ENCODE measurements at regions of chr7 and their contacts with region 1.

Region 1: GRCh38 chr7:87416682-87417587 is 58.5 kb downstream of the ABCB4 start:
- DNase-seq: peak; percentile 48
- H3K4me3 ChIP-seq: no peak overlapping the region
- H3K27ac ChIP-seq: no peak overlapping the region
- H3K4me1 ChIP-seq: peaks cover 8 to 9% of the 10 kb centered on the region in 2 experiments; a peak in 3 of 4 replicates
- H3K27me3 ChIP-seq: no peaks in the 10 kb centered on the region
- CTCF ChIP-seq: peak; percentile 93
- EP300 ChIP-seq: no peak
- RAD21 ChIP-seq: peak; percentile 98

Region 2: DNA sequence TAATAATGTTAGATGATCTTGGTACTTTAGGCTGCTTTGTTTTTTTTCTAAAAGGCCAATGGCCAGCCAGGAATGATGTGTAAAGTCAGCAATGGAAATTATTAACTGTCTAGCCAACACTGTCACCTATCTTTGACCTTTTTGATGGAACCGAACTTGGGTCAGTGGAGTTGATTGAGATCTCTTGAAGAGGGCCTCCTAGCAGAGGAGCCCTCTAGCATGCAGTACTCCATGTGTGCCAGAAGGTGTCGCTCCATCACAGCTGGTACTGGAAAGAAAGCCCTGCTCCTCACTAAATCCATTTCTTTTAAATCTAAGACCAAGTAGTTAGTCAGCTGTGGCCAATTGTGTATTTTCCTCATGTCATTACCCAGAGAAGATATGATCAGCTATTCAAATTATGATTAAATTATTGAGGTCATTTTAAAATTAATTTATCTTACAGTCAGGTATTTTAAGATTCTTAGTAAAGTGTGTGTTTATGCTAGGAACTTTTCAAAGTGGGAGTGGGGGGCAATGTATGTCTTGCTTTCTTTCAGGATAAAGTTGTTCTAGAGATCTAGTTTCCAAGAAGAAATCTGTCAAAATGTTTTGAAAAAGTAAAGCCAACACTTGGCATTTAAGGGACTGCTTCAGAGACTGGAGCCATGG is 104.6 kb before region 1 on chr7:
- CTCF ChIA-PET with region 1: interaction called, 409 read pairs
- POLR2A ChIA-PET with region 1: no interaction called
- DNase-seq: peak; percentile 73
- H3K4me3 ChIP-seq: no peak overlapping the region; a peak in 1 of 4 replicates
- H3K27ac ChIP-seq: no peak overlapping the region
- H3K4me1 ChIP-seq: peaks cover 0 to 5% of the 10 kb centered on the region in 2 experiments; a peak in 1 of 4 replicates
- H3K27me3 ChIP-seq: no peaks in the 10 kb centered on the region
- CTCF ChIP-seq: peak; percentile 100
- EP300 ChIP-seq: no peak
- RAD21 ChIP-seq: peak; percentile 100

Region 3: GRCh38 chr7:87330942-87331341 is 86.0 kb before region 1 on chr7:
- CTCF ChIA-PET with region 1: interaction called, 18 read pairs
- POLR2A ChIA-PET with region 1: no interaction called
- DNase-seq: no peak
- H3K4me3 ChIP-seq: no peak overlapping the region; a peak in 1 of 4 replicates
- H3K27ac ChIP-seq: no peak overlapping the region
- H3K4me1 ChIP-seq: no peaks in the 10 kb centered on the region
- H3K27me3 ChIP-seq: no peaks in the 10 kb centered on the region
- CTCF ChIP-seq: no peak
- EP300 ChIP-seq: no peak
- RAD21 ChIP-seq: no peak

Region 4: GRCh38 chr7:87398446-87398845 is 18.5 kb before region 1 on chr7:
- CTCF ChIA-PET with region 1: interaction called, 53 read pairs
- POLR2A ChIA-PET with region 1: no interaction called
- DNase-seq: no peak
- H3K4me3 ChIP-seq: no peak overlapping the region
- H3K27ac ChIP-seq: no peak overlapping the region
- H3K4me1 ChIP-seq: peaks cover 0 to 4% of the 10 kb centered on the region in 2 experiments; a peak in 1 of 4 replicates
- H3K27me3 ChIP-seq: no peaks in the 10 kb centered on the region
- CTCF ChIP-seq: no peak
- EP300 ChIP-seq: no peak
- RAD21 ChIP-seq: no peak

Region 5: DNA sequence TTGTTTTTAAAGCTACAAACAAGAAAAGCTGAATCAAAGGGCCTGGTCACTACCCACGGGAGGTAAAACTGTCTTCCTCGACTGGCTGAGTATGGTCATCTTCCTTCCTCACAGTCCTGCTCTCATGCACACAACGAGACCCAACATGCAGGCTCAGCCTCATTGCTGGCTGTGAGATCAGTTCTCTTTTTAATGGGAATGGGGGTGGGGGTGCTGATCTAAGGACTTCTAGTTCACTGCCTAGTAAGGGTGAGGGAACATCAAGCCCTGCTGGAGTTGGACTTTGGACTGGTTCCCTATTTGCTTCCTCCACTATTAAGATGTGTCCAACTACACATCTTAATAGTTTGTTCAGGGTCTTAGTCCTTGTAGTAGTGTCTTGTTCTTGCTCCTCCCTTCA is 10.4 kb after region 1 on chr7:
- CTCF ChIA-PET with region 1: interaction called, 16 read pairs
- POLR2A ChIA-PET with region 1: no interaction called
- DNase-seq: no peak
- H3K4me3 ChIP-seq: no peak overlapping the region
- H3K27ac ChIP-seq: no peak overlapping the region
- H3K4me1 ChIP-seq: no peaks in the 10 kb centered on the region
- H3K27me3 ChIP-seq: no peaks in the 10 kb centered on the region
- CTCF ChIP-seq: no peak
- EP300 ChIP-seq: no peak
- RAD21 ChIP-seq: no peak

Region 6: GRCh38 chr7:87445897-87446296 is 29.0 kb after region 1 on chr7:
- CTCF ChIA-PET with region 1: interaction called, 34 read pairs
- POLR2A ChIA-PET with region 1: no interaction called
- DNase-seq: no peak
- H3K4me3 ChIP-seq: no peak overlapping the region
- H3K27ac ChIP-seq: no peak overlapping the region
- H3K4me1 ChIP-seq: peaks cover 0 to 4% of the 10 kb centered on the region in 2 experiments; a peak in 2 of 4 replicates
- H3K27me3 ChIP-seq: no peaks in the 10 kb centered on the region
- CTCF ChIP-seq: no peak
- EP300 ChIP-seq: no peak
- RAD21 ChIP-seq: no peak